GM12878 (cell line): ENCODE measurements at regions of chr19 and their contacts with region 1.

Region 1: DNA sequence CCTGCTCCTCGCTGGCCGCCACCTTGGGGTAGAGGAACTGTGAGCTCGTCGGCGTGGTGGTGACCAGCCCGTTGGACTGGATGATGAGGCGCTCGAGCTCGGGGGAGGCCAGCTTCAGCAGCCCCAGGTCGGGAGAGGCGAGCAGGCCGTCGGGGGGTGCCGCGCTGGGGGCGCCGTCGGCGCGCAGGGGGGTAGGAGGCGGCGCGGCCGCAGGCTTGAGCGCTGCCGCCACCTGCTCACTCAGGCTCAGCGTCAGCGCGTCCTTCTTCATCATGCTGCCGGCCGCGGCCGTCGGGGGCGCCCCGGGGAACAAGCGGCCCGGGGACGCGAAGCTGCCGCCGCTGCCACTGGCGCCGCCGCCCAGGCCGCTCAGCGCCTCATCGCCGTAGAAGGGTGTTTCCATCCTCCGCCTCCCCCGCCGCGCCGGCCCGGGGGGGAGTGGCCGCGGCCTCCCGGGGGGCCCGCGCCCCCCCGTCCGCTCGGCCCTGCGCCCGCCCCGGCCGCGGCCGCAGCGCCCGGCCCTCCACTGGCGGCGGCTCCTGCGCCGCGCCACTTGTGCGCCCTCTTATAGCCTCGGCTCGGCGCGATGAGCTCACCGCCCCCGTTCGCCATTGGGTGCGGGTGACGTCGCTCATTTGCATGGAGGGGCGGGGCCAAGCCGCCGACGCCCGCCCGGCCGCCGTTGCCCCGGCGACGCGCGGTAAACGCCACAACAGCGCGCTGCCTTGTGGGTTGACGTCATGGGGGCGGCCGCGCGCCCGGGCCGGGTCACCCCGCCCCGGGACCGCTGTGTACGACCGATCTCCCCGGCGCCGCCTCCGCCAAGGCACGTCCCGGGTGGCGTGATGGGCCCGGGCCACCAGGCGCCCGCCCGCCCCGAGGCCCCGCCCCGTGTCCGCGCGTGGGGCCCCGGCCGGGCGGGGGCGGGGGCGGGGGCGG is at the start of gene JUND:
- DNase-seq: peak; percentile 88
- ATAC-seq: peak; percentile 64
- H3K4me3 ChIP-seq: peak within 1 kb of the TSS; percentile 98
- H3K27ac ChIP-seq: peak within 1 kb of the TSS; percentile 100
- H3K4me1 ChIP-seq: peaks cover 31% of the 10 kb centered on the region
- H3K27me3 ChIP-seq: no peaks in the 10 kb centered on the region
- CTCF ChIP-seq: peak in 1 of 3 experiments; percentile 12; a peak in 1 of 6 replicates
- EP300 ChIP-seq: peak; percentile 69 to 97; a peak in 3 of 4 replicates
- POLR2A ChIP-seq: peak; percentile 99
- RAD21 ChIP-seq: no peak
- polyA plus RNA-seq, gene JUND: 11.2 to 16.0 TPM

Region 2: DNA sequence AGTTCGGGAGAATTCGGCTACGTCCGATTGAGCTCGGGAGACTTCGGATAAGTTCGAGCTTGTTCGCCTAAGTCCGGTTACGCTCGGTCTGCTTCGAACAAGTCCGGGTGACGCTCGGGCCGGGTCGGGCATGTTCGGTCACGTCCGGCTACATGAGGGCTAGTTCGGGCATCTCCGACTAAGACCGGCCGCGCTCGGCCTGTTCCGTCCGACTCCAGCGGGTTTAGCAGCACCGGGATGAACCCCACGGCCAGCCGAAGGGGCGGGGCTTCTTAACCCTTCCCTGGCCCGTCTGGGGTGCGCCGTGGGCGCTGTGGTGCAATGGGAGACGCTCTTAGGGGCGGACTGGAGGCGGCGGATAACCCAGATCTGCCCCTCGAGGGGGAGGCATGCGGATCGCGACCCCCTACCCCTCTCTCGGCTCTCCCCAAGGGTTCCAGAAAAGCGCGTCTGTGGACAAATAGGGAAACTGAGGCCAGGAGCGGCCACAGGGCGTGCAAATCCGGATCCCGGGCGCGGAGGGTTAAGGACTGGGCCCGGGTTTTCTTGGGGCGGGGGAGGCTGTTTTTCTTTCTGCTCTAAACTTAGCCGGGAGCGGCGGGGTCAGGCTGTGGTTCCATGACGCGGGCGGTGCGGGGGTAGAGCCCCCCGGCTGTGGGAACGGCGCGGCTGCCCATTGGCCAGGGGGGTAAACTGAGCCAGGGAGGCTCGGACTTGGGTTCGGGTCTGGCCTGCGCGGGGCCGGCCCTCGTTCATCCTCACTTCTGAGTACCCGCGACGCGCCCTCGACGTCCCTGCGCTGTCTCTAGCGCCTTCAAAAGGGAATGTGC is 56.6 kb before region 1 on chr19:
- CTCF ChIA-PET with region 1: interaction called, 21 read pairs
- POLR2A ChIA-PET with region 1: interaction called, 9 read pairs
- RAD21 ChIA-PET with region 1: interaction called, 14 read pairs
- SMC1A ChIA-PET with region 1: interaction called, 3 read pairs
- in situ Hi-C with region 1: no loop called
- intact Hi-C with region 1: no loop called
- DNase-seq: peak; percentile 80
- ATAC-seq: peak; percentile 99
- H3K4me3 ChIP-seq: peak overlapping the region; percentile 18; the same call in 1 of the 2 replicates
- H3K27ac ChIP-seq: no peak overlapping the region
- H3K4me1 ChIP-seq: peaks cover 19% of the 10 kb centered on the region
- H3K27me3 ChIP-seq: peaks cover 0 to 7% of the 10 kb centered on the region in 2 experiments; a peak in 3 of 4 replicates
- CTCF ChIP-seq: no peak
- EP300 ChIP-seq: no peak
- POLR2A ChIP-seq: no peak
- RAD21 ChIP-seq: no peak

Region 3: DNA sequence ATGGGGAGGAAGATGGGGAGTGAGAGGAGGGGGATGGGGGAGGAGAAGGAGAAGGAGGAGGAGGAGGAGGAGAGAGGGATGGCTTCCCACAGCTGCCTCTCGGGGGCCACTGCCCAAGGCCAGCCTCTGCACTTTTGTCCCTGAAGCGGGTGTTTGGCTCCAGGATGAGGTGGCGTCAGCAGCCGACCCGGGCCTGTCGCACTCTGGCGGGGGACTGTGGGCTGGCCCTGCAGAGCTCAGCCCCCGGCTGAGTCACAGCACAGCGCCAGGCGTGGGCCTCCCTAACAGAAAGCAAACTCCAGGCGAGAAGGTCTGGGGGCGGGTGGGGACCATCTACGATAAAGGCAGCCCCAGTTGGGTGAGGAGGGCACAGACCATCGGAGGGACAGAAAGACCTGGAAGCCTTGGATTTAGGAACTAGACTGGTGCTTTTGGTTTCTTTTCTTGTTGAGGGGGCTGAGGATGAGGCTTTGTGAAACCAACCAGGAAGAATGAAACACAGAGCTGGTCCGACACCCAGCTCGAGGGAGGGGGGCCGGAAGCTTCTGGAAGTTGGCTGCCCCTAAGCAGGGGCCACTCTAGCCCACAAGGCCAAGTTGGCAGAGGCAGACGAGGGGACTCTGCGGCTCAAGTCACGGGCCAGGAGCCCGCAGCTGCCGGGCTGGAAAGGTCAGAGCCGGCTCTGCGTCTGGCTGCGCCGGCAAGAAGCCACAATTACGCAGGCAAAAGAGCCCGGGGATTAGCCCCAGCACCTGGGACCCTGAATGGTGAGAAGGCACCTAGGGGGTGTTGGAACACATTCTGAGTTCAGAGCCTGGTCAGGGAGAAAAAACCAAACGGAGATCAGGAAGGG is 23.3 kb after region 1 on chr19:
- CTCF ChIA-PET with region 1: interaction called, 122 read pairs
- POLR2A ChIA-PET with region 1: interaction called, 196 read pairs
- RAD21 ChIA-PET with region 1: interaction called, 135 read pairs
- SMC1A ChIA-PET with region 1: interaction called, 63 read pairs
- in situ Hi-C with region 1: no loop called
- intact Hi-C with region 1: loop called (anchors 1 kb)
- DNase-seq: no peak
- ATAC-seq: peak; percentile 79
- H3K4me3 ChIP-seq: peak overlapping the region; percentile 89
- H3K27ac ChIP-seq: peak overlapping the region; percentile 97
- H3K4me1 ChIP-seq: peaks cover 22% of the 10 kb centered on the region
- H3K27me3 ChIP-seq: no peaks in the 10 kb centered on the region
- CTCF ChIP-seq: no peak
- EP300 ChIP-seq: no peak; a peak in 2 of 4 replicates
- POLR2A ChIP-seq: peak; percentile 82
- RAD21 ChIP-seq: no peak

Region 4: DNA sequence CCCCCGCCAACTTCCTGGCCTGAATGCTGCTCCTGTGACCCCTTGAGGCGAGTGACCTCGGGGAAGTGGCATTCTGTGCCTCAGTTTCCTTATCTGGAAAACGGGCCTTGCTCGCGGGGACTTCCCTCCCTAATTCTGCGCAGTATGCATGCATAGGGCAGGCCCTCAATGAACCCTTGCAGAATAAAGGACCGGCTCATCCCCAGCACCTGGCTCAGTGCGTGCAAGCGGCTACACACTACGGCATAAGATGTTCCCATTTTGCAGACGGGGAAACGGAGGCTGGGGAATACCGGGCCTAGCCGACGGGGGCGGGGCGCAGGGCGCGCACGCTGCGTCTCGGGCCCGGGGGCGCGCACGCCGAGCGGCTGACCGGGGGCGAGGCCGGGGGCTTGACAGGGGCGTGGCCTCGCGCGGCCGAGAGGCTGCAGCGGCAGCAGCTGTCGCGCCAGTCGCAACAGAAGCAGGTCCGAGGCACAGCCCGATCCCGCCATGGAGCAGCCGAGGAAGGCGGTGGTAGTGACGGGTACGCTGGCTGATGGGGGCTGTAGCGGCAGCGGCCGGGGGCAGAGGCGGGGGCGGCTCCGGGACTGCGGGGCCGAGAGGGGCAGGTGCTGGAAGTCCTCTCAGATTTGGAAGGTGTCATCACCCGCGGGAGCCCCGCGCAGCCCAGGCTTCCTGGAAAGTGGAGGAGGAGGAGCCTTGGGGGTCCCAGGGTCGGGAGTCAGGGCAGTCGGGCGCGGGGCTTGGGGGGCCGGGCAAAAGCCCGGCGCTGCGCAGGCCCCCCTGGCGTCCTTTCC is 59.0 kb after region 1 on chr19 and contains the start of gene PGPEP1:
- CTCF ChIA-PET with region 1: interaction called, 48 read pairs
- POLR2A ChIA-PET with region 1: interaction called, 46 read pairs
- RAD21 ChIA-PET with region 1: interaction called, 31 read pairs
- SMC1A ChIA-PET with region 1: interaction called, 32 read pairs
- in situ Hi-C with region 1: no loop called
- intact Hi-C with region 1: loop called (anchors 5 kb)
- DNase-seq: no peak
- ATAC-seq: peak; percentile 86
- H3K4me3 ChIP-seq: peak within 1 kb of the TSS; percentile 79
- H3K27ac ChIP-seq: peak within 1 kb of the TSS; percentile 58
- H3K4me1 ChIP-seq: peaks cover 14% of the 10 kb centered on the region
- H3K27me3 ChIP-seq: no peaks in the 10 kb centered on the region
- CTCF ChIP-seq: no peak
- EP300 ChIP-seq: no peak
- POLR2A ChIP-seq: peak; percentile 70; the same call in 1 of the 2 replicates
- RAD21 ChIP-seq: no peak
- polyA plus RNA-seq, gene PGPEP1: 13.8 to 13.9 TPM

Region 5: DNA sequence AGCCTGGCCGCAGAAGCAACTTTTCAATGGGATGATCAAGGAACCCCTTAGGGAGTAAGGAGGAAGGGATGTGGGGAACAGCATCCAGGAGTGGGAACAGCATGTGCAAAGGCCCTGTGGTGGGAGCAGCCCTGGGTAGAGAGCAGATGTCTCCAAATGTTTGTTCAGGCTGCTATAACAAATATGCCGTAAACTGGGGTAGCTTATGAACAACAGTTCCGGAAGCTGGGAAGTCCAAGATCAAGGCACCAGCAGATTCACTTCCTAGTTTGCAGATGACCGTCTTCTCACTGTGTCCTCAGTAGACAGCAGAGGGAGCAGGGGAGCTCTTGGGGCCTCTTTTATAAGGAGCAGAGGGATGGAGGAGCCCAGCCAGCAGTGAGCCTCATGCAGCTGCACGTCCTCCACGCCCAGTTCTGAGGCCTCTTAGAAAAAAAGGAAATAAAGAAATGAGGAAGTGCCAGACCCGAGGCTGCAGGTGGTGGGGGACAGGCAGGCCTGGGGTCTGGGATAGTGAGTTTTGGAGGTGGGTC is 120.3 kb after region 1 on chr19:
- CTCF ChIA-PET with region 1: interaction called, 4 read pairs
- POLR2A ChIA-PET with region 1: interaction called, 20 read pairs
- RAD21 ChIA-PET with region 1: interaction called, 3 read pairs
- SMC1A ChIA-PET with region 1: interaction called, 7 read pairs
- in situ Hi-C with region 1: loop called (anchors 5 kb)
- intact Hi-C with region 1: no loop called
- DNase-seq: no peak
- ATAC-seq: peak; percentile 83
- H3K4me3 ChIP-seq: no peak overlapping the region
- H3K27ac ChIP-seq: peak overlapping the region; percentile 33
- H3K4me1 ChIP-seq: peaks cover 23% of the 10 kb centered on the region
- H3K27me3 ChIP-seq: no peaks in the 10 kb centered on the region
- CTCF ChIP-seq: peak; percentile 41 to 50 (median 41); a peak in 4 of 6 replicates
- EP300 ChIP-seq: no peak; a peak in 1 of 4 replicates
- POLR2A ChIP-seq: peak; percentile 51; the same call in 1 of the 2 replicates
- RAD21 ChIP-seq: peak; percentile 46